Vagina (tissue), 2 donors: ENCODE measurements at regions of chr2 and their contacts with region 1.

Region 1: DNA sequence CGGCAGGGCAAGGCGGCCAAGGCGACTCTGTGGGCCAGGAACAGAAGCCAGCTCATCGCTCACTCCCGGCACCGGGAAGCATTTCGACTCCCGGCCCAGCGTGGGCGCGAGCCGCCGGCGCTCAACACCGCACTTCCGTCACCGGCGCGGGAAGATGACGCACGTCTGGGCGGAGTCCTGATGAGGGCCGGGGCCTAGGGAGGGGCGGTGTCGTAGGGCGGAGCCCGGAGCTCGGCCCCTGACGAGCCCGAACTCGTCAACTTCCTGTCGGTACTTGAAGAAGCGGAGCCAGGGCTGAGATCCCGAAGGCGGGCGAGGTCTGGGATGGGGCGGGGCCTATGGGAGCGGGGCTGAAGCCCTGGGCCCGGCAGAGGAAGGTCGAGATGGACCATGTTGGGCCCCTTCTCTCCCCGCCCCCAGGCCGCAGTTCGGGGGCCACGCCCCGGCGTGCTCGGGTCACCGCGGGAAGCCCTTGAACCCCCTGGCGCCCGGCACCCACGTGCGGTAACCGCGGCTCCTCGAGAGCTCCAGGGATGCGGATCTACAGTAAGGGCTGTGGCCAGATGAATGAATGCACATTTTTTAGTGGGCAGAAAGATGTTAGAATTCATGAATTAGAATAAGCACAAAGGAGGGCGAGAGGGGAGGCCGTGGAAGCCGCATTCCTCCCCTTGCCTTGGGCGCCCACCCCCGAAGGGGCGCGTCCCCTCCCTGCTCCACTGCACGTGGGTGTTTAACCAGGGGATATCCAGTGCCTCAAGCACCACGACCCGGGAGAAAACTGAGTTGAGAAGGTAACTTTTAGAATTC is at the start of gene RNASEH1:
- DNase-seq: peak in 1 of 2 donors; percentile 98
- H3K4me3 ChIP-seq: peak within 1 kb of the TSS; percentile 91 to 96
- H3K27ac ChIP-seq: peak within 1 kb of the TSS; percentile 78
- H3K4me1 ChIP-seq: peaks cover 19% of the 10 kb centered on the region
- H3K27me3 ChIP-seq: no peaks in the 10 kb centered on the region
- CTCF ChIP-seq: no peak
- POLR2A ChIP-seq: peak in 1 of 2 donors; percentile 71
- total RNA-seq, gene RNASEH1: 17.2 TPM

Region 2: DNA sequence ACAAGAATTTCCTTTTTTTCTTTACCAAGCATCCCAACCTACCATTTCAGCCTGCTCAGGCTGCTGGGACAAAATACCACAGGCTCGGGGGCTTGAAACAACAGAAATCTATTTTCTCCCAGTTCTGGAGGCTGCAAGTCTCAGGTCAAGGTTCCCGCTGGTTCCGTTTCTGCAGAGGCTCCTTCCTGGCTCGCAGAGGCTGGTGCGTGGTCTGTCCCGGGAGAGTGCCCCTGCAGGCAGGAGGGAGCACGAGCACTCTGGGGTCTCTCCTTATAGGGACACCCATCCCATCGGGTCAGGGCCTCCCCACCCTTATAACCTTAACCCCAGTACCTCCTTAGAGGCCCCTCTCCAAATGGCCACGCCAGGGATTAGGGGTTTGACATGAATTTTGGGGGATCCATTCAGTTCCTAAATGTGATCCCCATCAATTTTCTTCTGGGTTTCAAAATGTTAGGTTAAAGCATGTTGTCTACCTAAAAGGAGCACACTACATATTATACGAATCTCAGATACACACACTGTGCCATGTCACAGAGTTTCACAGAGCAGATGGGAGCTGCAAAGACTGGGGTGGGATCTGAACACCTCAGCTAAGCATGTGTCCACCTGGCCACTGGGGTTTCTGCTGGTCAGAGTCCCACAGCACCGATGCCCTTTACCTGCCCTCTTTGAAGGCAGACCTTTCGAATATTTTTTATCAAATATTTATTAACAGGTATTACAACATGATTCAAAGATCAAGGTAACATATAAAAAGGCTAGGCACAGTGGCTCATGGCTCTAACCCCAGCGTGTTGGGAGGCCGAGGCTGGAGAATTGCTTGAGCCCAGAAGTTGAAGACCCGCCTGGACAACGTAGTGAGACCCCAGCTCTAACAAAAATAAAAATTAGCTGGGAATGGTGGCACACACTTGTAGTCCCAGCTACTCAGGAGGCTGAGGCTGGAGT is 21.5 kb before region 1 on chr2:
- intact Hi-C with region 1: loop called (anchors 2 kb)
- DNase-seq: no peak
- H3K4me3 ChIP-seq: peak overlapping the region; percentile 42
- H3K27ac ChIP-seq: peak overlapping the region; percentile 98
- H3K4me1 ChIP-seq: peaks cover 24% of the 10 kb centered on the region
- H3K27me3 ChIP-seq: no peaks in the 10 kb centered on the region
- CTCF ChIP-seq: no peak
- POLR2A ChIP-seq: no peak

Region 3: DNA sequence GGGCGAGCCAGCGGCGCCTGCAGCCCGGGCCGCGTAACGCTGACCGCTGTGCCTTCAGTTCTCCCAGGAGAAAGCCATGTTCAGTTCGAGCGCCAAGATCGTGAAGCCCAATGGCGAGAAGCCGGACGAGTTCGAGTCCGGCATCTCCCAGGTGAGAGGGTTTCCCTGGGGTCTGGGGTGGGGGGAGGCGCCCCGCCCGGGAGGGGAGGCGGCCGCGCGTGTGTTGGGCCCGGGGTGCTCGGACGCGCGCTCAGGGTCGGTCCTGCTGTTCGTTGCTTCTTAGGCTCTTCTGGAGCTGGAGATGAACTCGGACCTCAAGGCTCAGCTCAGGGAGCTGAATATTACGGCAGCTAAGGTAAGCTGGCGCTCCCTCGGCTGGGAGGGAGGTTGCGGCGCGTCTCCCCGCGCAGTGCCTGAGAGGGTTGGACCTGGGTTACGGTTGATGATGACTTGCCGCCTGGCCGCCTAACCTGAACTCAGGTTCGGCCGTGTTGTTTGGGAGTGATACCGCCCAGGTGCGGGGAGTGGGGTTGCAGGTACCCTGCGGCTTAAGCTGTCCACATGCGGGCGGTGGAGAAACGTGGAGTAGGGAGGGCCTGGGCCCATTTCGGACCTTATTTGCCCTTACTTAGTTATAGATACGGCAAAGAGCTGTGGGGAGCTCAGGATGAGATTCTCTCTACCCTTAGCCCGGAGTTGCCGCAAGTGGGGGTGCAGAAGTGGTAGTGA is 17.3 kb after region 1 on chr2:
- intact Hi-C with region 1: loop called (anchors 1 kb)
- DNase-seq: no peak
- H3K4me3 ChIP-seq: peak overlapping the region; percentile 85 to 95
- H3K27ac ChIP-seq: peak overlapping the region; percentile 91
- H3K4me1 ChIP-seq: peaks cover 50% of the 10 kb centered on the region
- H3K27me3 ChIP-seq: no peaks in the 10 kb centered on the region
- CTCF ChIP-seq: no peak
- POLR2A ChIP-seq: no peak

Region 4: GRCh38 chr2:3970791-3971652 is 412.6 kb after region 1 on chr2:
- intact Hi-C with region 1: no loop called
- DNase-seq: no peak
- H3K4me3 ChIP-seq: no peak overlapping the region
- H3K27ac ChIP-seq: no peak overlapping the region
- H3K4me1 ChIP-seq: no peaks in the 10 kb centered on the region
- H3K27me3 ChIP-seq: no peaks in the 10 kb centered on the region
- CTCF ChIP-seq: no peak
- POLR2A ChIP-seq: no peak